Left colon (tissue), 2 donors: ENCODE measurements at regions of chr1 and their contacts with region 1.

Region 1: GRCh38 chr1:201970334-201971159 is 11.9 kb upstream of the RNPEP start:
- DNase-seq: no peak
- ATAC-seq: peak; percentile 26

Region 2: DNA sequence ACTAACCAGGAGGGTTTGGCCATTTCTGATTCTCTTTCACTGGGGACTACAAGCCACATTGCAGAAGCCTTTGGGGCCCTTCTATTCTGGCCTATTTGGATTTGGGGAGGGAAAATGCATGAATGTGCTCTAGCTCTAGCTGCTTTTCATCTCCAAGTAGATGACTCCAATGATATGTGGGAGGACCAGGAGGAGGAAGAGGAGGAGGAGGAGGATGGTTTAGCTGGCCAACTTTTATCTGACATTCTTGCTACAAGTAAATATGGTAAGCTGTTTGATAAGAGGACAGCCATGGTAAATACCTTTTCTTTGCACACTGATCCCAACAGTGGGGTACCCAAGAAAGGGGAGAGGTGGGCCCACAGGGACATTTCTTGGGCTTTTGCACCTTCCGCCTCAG is 95.9 kb before region 1 on chr1:
- intact Hi-C with region 1: loop called in 1 of 2 experiments (anchors 2 kb)
- DNase-seq: no peak
- ATAC-seq: no peak

Region 3: DNA sequence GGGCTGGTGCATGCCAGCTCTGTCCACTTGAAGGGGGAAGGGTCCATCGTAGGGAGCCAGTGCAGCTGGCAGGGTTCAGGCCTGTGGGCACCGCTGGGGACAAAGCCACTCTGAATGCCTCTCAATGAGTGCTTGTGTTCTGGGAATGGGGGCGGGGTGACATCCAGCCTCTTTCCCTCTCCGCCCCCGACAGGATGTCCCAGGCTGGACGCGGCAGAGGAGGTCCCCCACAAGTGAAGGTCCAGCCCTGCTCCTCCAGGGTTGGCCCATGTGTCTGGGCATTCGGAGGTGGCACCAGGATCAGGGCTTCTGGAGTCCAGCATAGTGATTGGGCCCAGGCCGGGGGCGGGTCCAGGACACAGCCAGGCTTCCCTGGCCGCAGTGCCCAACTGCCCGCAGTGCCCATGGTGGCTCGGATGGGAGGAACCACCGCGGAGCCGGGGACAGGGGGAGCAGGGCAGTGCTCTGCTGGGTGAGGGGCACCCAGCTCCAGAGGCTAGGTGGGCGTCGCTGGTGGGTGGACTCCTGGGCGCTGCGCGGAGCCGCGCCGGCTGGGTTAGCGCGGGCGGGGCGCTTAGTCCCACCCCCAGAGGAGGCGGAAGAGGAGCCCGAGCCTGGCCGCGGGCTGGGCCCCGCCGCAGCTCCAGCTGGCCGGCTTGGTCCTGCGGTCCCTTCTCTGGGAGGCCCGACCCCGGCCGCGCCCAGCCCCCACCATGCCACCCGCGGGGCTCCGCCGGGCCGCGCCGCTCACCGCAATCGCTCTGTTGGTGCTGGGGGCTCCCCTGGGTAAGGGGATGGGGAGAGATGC is 82.1 kb before region 1 on chr1 and contains the start of gene SHISA4:
- intact Hi-C with region 1: loop called (anchors 5 to 10 kb)
- DNase-seq: peak; percentile 57 to 63
- ATAC-seq: peak; percentile 91
- total RNA-seq, gene SHISA4: 1.7 to 2.6 TPM

Region 4: GRCh38 chr1:201895913-201896807 is 74.4 kb before region 1 on chr1:
- intact Hi-C with region 1: loop called (anchors 5 to 10 kb)
- DNase-seq: peak; percentile 87 to 90
- ATAC-seq: peak; percentile 96

Region 5: GRCh38 chr1:202144402-202145067 is 174.0 kb after region 1 on chr1 and contains the start of gene ARL8A:
- intact Hi-C with region 1: no loop called
- DNase-seq: peak; percentile 73 to 87
- ATAC-seq: peak; percentile 83
- total RNA-seq, gene ARL8A: 45.4 to 49.2 TPM